Gastrocnemius medialis (tissue), 4 donors: ENCODE measurements at regions of chr1 and their contacts with region 1.

Region 1: GRCh38 chr1:156193488-156194299 is at the start of gene SLC25A44:
- DNase-seq: peak; percentile 96 to 97
- ATAC-seq: peak; percentile 99 to 100
- H3K4me3 ChIP-seq: peak within 1 kb of the TSS; percentile 81 to 95 (median 88)
- H3K27ac ChIP-seq: peak within 1 kb of the TSS; percentile 81 to 90 (median 86)
- H3K4me1 ChIP-seq: peaks cover 31 to 39% of the 10 kb centered on the region in 2 donors
- H3K27me3 ChIP-seq: no peaks in the 10 kb centered on the region
- CTCF ChIP-seq: peak; percentile 12 to 69 (median 59)
- POLR2A ChIP-seq: peak; percentile 73 to 78
- total RNA-seq, gene SLC25A44: 9.2 to 19.5 (median 18.5) TPM

Region 2: DNA sequence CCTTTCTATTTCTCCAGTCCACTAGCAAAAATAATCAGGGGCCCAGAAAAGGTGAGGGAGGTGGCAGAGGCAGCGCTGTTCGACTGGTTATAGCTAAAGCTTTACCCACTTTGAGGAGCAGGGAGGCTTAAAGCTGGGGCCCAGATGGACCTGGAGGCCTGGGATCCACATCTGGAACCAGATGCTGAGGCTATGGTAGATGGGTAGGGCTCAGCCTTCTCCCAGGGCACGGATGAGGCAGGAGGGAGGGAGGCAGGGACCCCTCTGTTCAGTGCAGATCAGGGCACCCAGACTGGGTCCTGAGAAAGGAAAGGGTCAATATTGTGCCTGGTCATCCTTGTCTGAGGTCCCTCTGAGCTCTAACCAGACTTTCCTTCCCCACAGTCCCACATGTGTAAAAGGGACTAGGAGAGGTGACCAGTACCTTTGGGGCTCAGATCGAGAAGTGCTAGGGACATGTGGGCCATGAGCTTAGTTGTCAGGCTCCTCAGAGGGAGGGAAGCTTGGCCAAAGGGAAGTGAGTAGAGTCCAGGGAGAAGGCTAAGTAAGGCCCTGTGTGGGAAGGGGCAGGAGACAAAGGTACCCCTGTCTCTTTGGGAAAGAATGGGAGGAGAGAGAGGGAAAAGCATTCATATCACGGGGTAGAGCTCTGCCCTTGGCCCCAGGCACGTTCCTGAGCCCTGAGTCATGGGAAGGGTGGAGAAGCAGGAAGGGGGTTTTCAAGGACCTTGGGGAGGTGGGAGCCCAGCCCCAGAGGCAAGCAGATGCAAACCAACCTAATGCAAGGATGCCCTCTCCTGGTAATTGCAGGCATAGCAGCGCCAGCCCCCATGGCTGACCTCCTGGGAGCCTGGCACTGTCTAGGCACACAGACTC is 63.8 kb before region 1 on chr1:
- in situ Hi-C with region 1: no loop called
- intact Hi-C with region 1: no loop called
- DNase-seq: peak; percentile 64 to 88
- ATAC-seq: peak; percentile 59 to 79
- H3K4me3 ChIP-seq: peak overlapping the region in 2 of 4 donors; percentile 8 to 42
- H3K27ac ChIP-seq: peak overlapping the region; percentile 98 to 99 (median 98)
- H3K4me1 ChIP-seq: peaks cover 53 to 59% of the 10 kb centered on the region in 2 donors
- H3K27me3 ChIP-seq: no peaks in the 10 kb centered on the region
- CTCF ChIP-seq: peak; percentile 98 to 99 (median 99)
- POLR2A ChIP-seq: no peak

Region 3: DNA sequence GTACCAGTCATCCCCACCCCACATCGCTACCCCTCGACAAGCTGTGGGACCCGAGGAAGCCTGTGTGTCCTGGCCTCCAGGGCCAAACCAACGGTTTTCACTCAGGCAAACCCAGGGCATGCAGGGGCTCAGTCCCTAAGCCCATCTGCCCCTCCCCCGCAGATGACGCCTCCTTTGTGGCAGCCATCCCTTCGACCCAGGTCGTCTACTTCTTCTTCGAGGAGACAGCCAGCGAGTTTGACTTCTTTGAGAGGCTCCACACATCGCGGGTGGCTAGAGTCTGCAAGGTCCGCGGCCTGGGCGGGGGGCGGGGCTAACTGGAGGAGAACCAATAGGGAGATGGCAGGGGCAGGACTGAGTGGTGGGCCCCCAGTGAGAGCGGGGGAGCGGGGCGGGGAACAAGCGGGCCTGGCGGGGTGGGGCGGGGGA is 32.9 kb before region 1 on chr1:
- in situ Hi-C with region 1: no loop called
- intact Hi-C with region 1: loop called (anchors 1 kb)
- DNase-seq: peak; percentile 84 to 91
- ATAC-seq: peak; percentile 85 to 86
- H3K4me3 ChIP-seq: peak overlapping the region; percentile 56 to 80 (median 62)
- H3K27ac ChIP-seq: peak overlapping the region; percentile 93 to 97 (median 94)
- H3K4me1 ChIP-seq: peaks cover 10 to 18% of the 10 kb centered on the region in 2 donors
- H3K27me3 ChIP-seq: no peaks in the 10 kb centered on the region
- CTCF ChIP-seq: no peak
- POLR2A ChIP-seq: peak; percentile 28 to 45

Region 4: GRCh38 chr1:156359973-156360372 is 166.3 kb after region 1 on chr1:
- in situ Hi-C with region 1: no loop called
- intact Hi-C with region 1: no loop called
- DNase-seq: no peak
- ATAC-seq: no peak
- H3K4me3 ChIP-seq: no peak overlapping the region
- H3K27ac ChIP-seq: no peak overlapping the region
- H3K4me1 ChIP-seq: no peaks in the 10 kb centered on the region
- H3K27me3 ChIP-seq: peaks cover 19 to 24% (median 22%) of the 10 kb centered on the region in 3 donors
- CTCF ChIP-seq: no peak
- POLR2A ChIP-seq: no peak

Region 5: DNA sequence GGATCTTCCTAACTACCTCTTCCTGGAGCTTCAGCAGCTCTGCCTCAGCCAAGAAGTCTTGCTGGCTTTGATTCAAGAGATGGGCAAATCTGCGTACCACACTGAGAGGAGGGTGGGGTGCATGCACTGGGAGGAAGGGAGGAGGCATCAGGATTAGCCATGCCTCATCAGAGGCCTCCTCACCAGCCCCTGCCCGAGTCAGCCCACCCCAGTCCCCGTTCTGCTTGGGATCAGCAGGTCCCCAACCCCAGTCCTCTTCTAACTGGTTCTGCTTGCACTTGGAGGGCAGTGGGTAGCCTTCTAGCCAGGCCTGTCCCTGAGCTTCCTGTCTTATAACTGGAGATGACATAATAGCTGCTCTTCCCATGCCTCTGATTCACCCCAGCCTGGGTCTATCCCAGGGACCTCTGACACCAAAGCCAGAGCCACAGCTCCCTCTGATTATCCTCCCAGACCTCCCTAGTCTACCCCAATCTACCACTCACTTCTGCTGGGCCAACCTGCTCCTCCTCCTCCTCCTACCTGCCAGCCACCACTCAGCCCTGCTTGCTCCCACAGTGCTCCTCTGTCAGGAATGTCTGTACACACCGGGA is 347.2 kb after region 1 on chr1:
- in situ Hi-C with region 1: no loop called
- intact Hi-C with region 1: no loop called
- DNase-seq: peak in 1 of 2 donors; percentile 10
- ATAC-seq: peak in 1 of 2 donors; percentile 43
- H3K4me3 ChIP-seq: no peak overlapping the region
- H3K27ac ChIP-seq: no peak overlapping the region
- H3K4me1 ChIP-seq: no peaks in the 10 kb centered on the region
- H3K27me3 ChIP-seq: no peaks in the 10 kb centered on the region
- CTCF ChIP-seq: no peak
- POLR2A ChIP-seq: no peak